Mammary epithelial cell (primary cell): ENCODE measurements at regions of chr18 and their contacts with region 1.

Region 1: GRCh38 chr18:45839414-45840395 is 14.2 kb downstream of the SIGLEC15 start:
- DNase-seq: peak; percentile 62
- H3K4me3 ChIP-seq: no peak overlapping the region
- H3K27ac ChIP-seq: no peak overlapping the region
- H3K4me1 ChIP-seq: peaks cover 12% of the 10 kb centered on the region
- H3K27me3 ChIP-seq: no peaks in the 10 kb centered on the region
- CTCF ChIP-seq: peak; percentile 75 to 78

Region 2: DNA sequence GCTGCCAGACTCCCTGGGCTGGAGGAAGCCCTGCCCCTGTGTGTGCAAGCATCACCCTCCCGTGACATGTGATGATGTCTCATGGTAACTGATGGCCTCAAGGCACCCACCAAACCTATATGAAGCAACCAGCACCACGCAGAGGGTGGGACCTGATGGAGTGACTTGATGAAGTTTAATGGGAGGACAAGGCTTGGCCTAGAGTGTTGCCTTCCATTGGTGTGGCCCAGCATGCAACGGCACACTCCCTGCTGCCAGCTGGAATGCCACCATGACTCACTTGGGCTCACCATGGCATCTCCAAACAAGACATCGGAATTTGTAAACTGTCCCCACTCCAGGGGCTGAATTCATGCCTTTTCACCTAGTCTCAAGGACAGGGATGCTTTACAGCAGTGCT is 124.4 kb before region 1 on chr18:
- CTCF ChIA-PET with region 1: no interaction called
- dilution Hi-C with region 1: no loop called
- in situ Hi-C with region 1: loop called in 1 of 2 experiments (anchors 10 kb)
- intact Hi-C with region 1: no loop called
- DNase-seq: no peak
- H3K4me3 ChIP-seq: no peak overlapping the region
- H3K27ac ChIP-seq: no peak overlapping the region
- H3K4me1 ChIP-seq: no peaks in the 10 kb centered on the region
- H3K27me3 ChIP-seq: no peaks in the 10 kb centered on the region
- CTCF ChIP-seq: no peak

Region 3: DNA sequence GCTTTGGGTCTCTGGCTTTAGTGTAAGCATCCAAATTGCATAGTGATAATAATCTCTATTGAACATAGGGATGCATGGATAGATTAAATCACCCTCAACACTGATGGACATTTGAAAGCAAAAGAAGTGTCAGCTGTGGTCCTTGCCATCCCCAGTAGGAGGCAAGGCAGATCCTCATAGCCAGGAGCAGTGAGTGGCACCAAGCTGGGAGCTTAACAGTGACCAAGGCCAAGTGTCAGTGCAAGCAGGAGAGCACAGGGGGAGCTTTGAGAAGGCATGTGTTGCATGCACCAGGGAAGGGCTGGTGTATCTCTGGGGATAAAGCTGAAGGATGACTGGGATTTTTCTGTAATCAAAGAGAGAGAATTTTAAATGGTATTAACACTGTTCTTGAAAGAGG is 101.0 kb before region 1 on chr18:
- CTCF ChIA-PET with region 1: no interaction called
- dilution Hi-C with region 1: loop called (anchors 5 kb)
- in situ Hi-C with region 1: no loop called
- intact Hi-C with region 1: no loop called
- DNase-seq: no peak
- H3K4me3 ChIP-seq: no peak overlapping the region
- H3K27ac ChIP-seq: no peak overlapping the region
- H3K4me1 ChIP-seq: no peaks in the 10 kb centered on the region
- H3K27me3 ChIP-seq: no peaks in the 10 kb centered on the region
- CTCF ChIP-seq: peak in 1 of 2 donors; percentile 23

Region 4: GRCh38 chr18:45793306-45793965 is 46.3 kb before region 1 on chr18:
- CTCF ChIA-PET with region 1: no interaction called
- dilution Hi-C with region 1: no loop called
- in situ Hi-C with region 1: no loop called
- intact Hi-C with region 1: loop called (anchors 2 kb)
- DNase-seq: peak; percentile 99
- H3K4me3 ChIP-seq: no peak overlapping the region
- H3K27ac ChIP-seq: peak overlapping the region; percentile 80
- H3K4me1 ChIP-seq: peaks cover 16% of the 10 kb centered on the region
- H3K27me3 ChIP-seq: no peaks in the 10 kb centered on the region
- CTCF ChIP-seq: no peak

Region 5: GRCh38 chr18:45825258-45826044 is 14.3 kb before region 1 on chr18 and contains the start of gene SIGLEC15:
- CTCF ChIA-PET with region 1: no interaction called
- dilution Hi-C with region 1: no loop called
- in situ Hi-C with region 1: no loop called
- intact Hi-C with region 1: no loop called
- DNase-seq: no peak
- H3K4me3 ChIP-seq: no peak within 1 kb of the TSS
- H3K27ac ChIP-seq: no peak within 1 kb of the TSS
- H3K4me1 ChIP-seq: peaks cover 18% of the 10 kb centered on the region
- H3K27me3 ChIP-seq: no peaks in the 10 kb centered on the region
- CTCF ChIP-seq: no peak
- total RNA-seq, gene SIGLEC15: 0.17 TPM in 1 of 2 donors, not detected in the other

Region 6: GRCh38 chr18:45879681-45880655 is 40.3 kb after region 1 on chr18:
- CTCF ChIA-PET with region 1: no interaction called
- dilution Hi-C with region 1: no loop called
- in situ Hi-C with region 1: no loop called
- intact Hi-C with region 1: loop called (anchors 1 kb)
- DNase-seq: peak; percentile 50
- H3K4me3 ChIP-seq: no peak overlapping the region
- H3K27ac ChIP-seq: no peak overlapping the region
- H3K4me1 ChIP-seq: no peaks in the 10 kb centered on the region
- H3K27me3 ChIP-seq: no peaks in the 10 kb centered on the region
- CTCF ChIP-seq: peak; percentile 99